ENCODE measurements at regions of chr7 and their contacts with region 1.

Region 1: GRCh38 chr7:142853739-142854371 is 1.0 kb upstream of the EPHB6 start:
- DNase-seq: peak; percentile 56 to 74 (median 68)
- ATAC-seq: peak; percentile 88
- H3K4me3 ChIP-seq: peak overlapping the region; percentile 85
- H3K4me3 Mint-ChIP-seq: peak overlapping the region; percentile 90 to 99 (median 97)
- H3K27ac ChIP-seq: peak overlapping the region; percentile 69
- H3K27ac Mint-ChIP-seq: peak overlapping the region; percentile 37 to 92 (median 89)
- H3K4me1 ChIP-seq: peaks cover 4 to 12% of the 10 kb centered on the region in 2 donors
- H3K4me1 Mint-ChIP-seq: peaks cover 17 to 61% (median 39%) of the 10 kb centered on the region in 7 donors
- H3K27me3 ChIP-seq: no peaks in the 10 kb centered on the region
- H3K27me3 Mint-ChIP-seq: peaks cover 0 to 30% (median 0%) of the 10 kb centered on the region in 5 donors

Region 2: GRCh38 chr7:142434666-142435167 is 419.1 kb before region 1 on chr7:
- CTCF ChIA-PET with region 1: no interaction called
- POLR2A ChIA-PET with region 1: no interaction called
- intact Hi-C with region 1: no loop called
- DNase-seq: no peak
- ATAC-seq: no peak
- H3K4me3 ChIP-seq: peak overlapping the region; percentile 52
- H3K4me3 Mint-ChIP-seq: peak overlapping the region; percentile 68 to 89 (median 82)
- H3K27ac ChIP-seq: peak overlapping the region; percentile 40
- H3K27ac Mint-ChIP-seq: peak overlapping the region; percentile 78 to 91 (median 85)
- H3K4me1 ChIP-seq: peaks cover 6 to 12% of the 10 kb centered on the region in 2 donors
- H3K4me1 Mint-ChIP-seq: peaks cover 25 to 52% (median 46%) of the 10 kb centered on the region in 7 donors
- H3K27me3 ChIP-seq: no peaks in the 10 kb centered on the region
- H3K27me3 Mint-ChIP-seq: peaks cover 0 to 8% (median 0%) of the 10 kb centered on the region in 5 donors

Region 3: DNA sequence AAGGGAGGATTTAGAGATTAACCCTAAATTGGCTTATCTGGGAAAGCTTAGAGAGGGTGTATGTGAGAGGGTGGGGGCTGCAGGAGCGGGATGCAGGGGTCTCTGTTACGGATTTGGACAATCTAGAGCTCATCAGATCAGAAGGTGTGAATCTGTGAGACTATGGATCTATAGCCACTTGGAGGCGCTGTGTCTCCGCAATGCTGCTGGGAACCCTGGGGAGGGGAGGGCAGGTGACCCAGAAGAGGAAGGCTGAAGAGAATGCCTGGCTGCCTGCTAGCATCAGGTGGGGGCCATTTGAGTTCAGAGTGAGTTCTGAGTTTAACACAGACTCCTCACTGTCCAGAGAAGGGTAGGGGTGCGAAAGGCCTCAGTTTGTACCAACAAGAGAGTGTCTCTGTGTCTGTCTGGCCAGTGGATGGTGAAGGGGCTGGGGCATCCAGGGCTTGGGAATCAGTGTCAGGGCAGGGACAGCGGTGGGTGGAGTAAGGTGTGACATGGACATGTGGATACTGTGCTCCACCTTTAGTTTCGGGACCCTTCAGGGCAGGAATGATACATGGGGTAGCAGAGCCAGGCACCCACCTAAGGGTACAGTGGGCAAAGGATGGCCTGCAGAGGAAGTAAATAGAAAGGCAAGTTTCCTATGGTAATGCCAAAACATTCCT is 408.7 kb before region 1 on chr7:
- CTCF ChIA-PET with region 1: no interaction called
- POLR2A ChIA-PET with region 1: interaction called, 3 read pairs
- intact Hi-C with region 1: loop called in 1 of 2 experiments (anchors 5 kb)
- DNase-seq: peak in 6 of 9 donors; percentile 33 to 54 (median 40)
- ATAC-seq: peak; percentile 63
- H3K4me3 ChIP-seq: no peak overlapping the region
- H3K4me3 Mint-ChIP-seq: peak overlapping the region in 6 of 10 donors; percentile 7 to 41 (median 22)
- H3K27ac ChIP-seq: no peak overlapping the region
- H3K27ac Mint-ChIP-seq: peak overlapping the region; percentile 48 to 82 (median 71)
- H3K4me1 ChIP-seq: peaks cover 0 to 23% of the 10 kb centered on the region in 2 donors
- H3K4me1 Mint-ChIP-seq: peaks cover 17 to 40% (median 35%) of the 10 kb centered on the region in 7 donors
- H3K27me3 ChIP-seq: no peaks in the 10 kb centered on the region
- H3K27me3 Mint-ChIP-seq: peaks cover 0 to 5% (median 0%) of the 10 kb centered on the region in 5 donors

Region 4: DNA sequence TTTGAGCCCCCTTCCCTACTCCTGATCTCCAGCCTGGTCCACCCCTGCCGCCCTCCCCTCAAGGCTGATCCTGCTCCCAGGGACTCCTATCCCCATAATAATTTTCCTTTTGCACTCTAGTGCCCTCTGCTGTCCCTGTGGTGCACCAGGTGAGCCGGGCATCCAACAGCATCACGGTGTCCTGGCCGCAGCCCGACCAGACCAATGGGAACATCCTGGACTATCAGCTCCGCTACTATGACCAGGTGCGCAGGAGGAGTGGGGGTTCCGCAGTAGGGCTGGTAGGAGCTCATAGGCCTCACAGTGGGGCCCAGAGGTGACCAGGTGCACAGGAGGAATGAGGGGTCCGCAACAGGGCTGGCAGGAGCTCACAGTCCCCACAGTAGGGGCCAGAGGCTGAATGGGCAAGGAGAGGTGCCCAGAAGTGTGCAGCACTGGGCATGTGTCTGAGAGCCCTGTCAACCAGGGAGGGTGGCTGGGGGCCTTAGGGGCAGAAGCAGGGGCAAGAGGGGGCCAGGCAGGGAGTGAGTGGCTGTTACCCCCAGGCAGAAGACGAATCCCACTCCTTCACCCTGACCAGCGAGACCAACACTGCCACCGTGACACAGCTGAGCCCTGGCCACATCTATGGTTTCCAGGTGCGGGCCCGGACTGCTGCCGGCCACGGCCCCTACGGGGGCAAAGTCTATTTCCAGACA is 12.7 kb after region 1 on chr7:
- CTCF ChIA-PET with region 1: interaction called, 24 read pairs
- POLR2A ChIA-PET with region 1: interaction called, 3 read pairs
- intact Hi-C with region 1: loop called (anchors 1 kb)
- DNase-seq: peak in 4 of 9 donors; percentile 7 to 27 (median 13)
- ATAC-seq: peak; percentile 52
- H3K4me3 ChIP-seq: no peak overlapping the region
- H3K4me3 Mint-ChIP-seq: peak overlapping the region in 1 of 10 donors; percentile 20
- H3K27ac ChIP-seq: no peak overlapping the region
- H3K27ac Mint-ChIP-seq: peak overlapping the region in 4 of 9 donors; percentile 32 to 76 (median 50)
- H3K4me1 ChIP-seq: no peaks in the 10 kb centered on the region
- H3K4me1 Mint-ChIP-seq: peaks cover 0 to 7% (median 4%) of the 10 kb centered on the region in 7 donors
- H3K27me3 ChIP-seq: no peaks in the 10 kb centered on the region
- H3K27me3 Mint-ChIP-seq: no peaks in the 10 kb centered on the region

Region 5: GRCh38 chr7:142873281-142873787 is 19.5 kb after region 1 on chr7:
- CTCF ChIA-PET with region 1: interaction called, 4 read pairs
- POLR2A ChIA-PET with region 1: interaction called, 3 read pairs
- intact Hi-C with region 1: loop called in 1 of 2 experiments (anchors 2 kb)
- DNase-seq: peak in 1 of 9 donors; percentile 34
- ATAC-seq: peak; percentile 43
- H3K4me3 ChIP-seq: no peak overlapping the region
- H3K4me3 Mint-ChIP-seq: no peak overlapping the region
- H3K27ac ChIP-seq: no peak overlapping the region
- H3K27ac Mint-ChIP-seq: peak overlapping the region in 2 of 9 donors; percentile 17 to 59
- H3K4me1 ChIP-seq: no peaks in the 10 kb centered on the region
- H3K4me1 Mint-ChIP-seq: no peaks in the 10 kb centered on the region
- H3K27me3 ChIP-seq: no peaks in the 10 kb centered on the region
- H3K27me3 Mint-ChIP-seq: peaks cover 0 to 5% (median 0%) of the 10 kb centered on the region in 5 donors

Region 6: GRCh38 chr7:142880876-142881505 is 27.1 kb after region 1 on chr7:
- CTCF ChIA-PET with region 1: interaction called, 6 read pairs
- POLR2A ChIA-PET with region 1: interaction called, 3 read pairs
- intact Hi-C with region 1: loop called (anchors 1 kb)
- DNase-seq: peak; percentile 29 to 60 (median 53)
- ATAC-seq: peak; percentile 76
- H3K4me3 ChIP-seq: no peak overlapping the region
- H3K4me3 Mint-ChIP-seq: no peak overlapping the region
- H3K27ac ChIP-seq: no peak overlapping the region
- H3K27ac Mint-ChIP-seq: no peak overlapping the region
- H3K4me1 ChIP-seq: no peaks in the 10 kb centered on the region
- H3K4me1 Mint-ChIP-seq: no peaks in the 10 kb centered on the region
- H3K27me3 ChIP-seq: no peaks in the 10 kb centered on the region
- H3K27me3 Mint-ChIP-seq: peaks cover 0 to 20% (median 2%) of the 10 kb centered on the region in 5 donors